Natural killer cell (primary cell): ENCODE measurements at regions of chr7 and their contacts with region 1.

Region 1: DNA sequence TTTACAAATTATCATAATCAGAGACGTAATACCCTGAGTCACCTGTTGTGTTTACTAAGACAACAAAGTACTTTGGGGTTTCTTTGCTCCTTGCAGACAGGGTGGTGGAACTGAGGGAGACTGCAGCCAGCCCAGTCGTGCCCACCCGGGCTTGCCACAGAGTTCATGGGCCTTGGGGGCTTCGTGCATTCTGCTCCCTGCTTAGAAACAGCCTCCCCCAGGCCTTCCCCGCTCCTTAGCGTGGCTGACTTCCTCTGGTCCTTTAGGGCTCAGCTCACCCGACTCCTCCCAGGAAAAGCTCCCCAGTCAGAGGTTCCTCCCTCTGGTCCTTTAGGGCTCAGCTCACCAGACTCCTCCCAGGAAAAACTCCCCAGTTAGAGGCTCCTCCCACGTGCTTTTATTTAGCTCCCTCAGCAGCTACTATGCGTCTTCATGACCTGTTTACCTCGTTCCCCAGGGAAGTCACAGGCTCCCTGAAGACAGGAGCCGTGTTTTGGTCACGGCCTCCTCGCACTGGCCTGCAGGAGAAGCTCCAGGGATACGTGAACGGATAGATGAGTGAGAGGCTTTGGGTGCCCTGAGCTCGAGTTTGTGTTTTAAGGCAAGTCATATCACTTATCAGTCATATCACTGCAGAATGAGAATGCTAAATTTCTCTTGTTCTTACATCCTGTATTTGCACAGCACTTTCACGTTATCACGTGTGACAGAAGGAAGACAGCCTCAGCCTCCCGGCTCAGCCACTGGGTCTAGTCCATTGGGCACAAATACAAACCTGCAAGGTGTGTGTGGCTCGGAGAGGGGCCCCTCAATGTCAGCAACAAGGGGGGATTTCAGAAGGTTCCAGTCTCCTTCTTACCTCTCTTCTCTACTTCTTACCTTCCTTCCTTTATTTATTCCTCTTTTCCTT is 52.7 kb upstream of the VIPR2 start:
- DNase-seq: peak in 1 of 2 donors; percentile 68
- ATAC-seq: peak; percentile 24 to 69 (median 35)
- H3K4me3 ChIP-seq: peak overlapping the region; percentile 2
- H3K4me3 Mint-ChIP-seq: peak overlapping the region; percentile 91
- H3K27ac ChIP-seq: peak overlapping the region; percentile 82
- H3K27ac Mint-ChIP-seq: peak overlapping the region; percentile 96 to 100
- H3K4me1 ChIP-seq: peaks cover 81% of the 10 kb centered on the region
- H3K4me1 Mint-ChIP-seq: peaks cover 59 to 69% of the 10 kb centered on the region in 2 donors
- H3K27me3 ChIP-seq: no peaks in the 10 kb centered on the region
- H3K27me3 Mint-ChIP-seq: no peaks in the 10 kb centered on the region
- CTCF ChIP-seq: no peak

Region 2: DNA sequence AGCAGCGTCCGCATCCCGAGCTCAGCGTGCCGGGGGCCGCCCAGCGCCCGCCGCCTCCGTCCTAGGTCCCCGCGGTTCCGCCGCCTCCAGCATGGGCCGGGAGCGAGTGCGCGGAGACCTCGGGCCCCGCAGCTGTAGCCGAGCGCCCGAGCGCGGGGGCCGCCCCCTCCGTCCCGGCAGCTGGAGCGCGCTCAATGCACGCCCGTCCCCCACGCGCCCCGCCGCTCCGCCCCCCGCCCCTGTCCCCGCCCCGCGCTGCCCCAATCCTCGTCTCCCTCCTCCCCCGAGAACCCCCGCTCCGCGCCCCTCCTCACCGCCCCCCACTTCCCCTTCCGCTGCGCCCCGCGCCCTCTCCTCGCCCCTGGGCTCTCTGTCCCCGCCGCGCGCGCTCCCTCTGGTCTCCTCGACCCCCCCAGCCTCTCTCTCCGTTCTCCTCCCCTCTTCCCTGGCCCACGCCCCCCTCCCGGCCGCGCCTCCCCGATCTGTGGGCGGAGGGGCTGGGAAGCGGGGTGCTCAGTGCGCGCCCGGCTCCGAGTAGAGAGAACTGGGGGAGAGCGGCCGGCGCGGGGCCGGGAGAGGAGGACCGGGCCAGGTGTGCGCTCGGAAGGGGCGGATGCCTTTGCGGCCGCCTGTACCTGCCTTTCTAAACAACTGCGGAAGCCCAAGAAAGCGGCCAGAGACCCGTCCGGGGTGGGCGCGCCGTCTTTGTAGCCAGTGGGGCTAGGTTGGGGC is 52.4 kb before region 1 on chr7 and contains the start of gene VIPR2:
- intact Hi-C with region 1: loop called (anchors 5 kb)
- DNase-seq: peak; percentile 29 to 55
- ATAC-seq: peak; percentile 79 to 82 (median 82)
- H3K4me3 ChIP-seq: peak within 1 kb of the TSS; percentile 45
- H3K4me3 Mint-ChIP-seq: peak within 1 kb of the TSS; percentile 84
- H3K27ac ChIP-seq: no peak within 1 kb of the TSS
- H3K27ac Mint-ChIP-seq: peak within 1 kb of the TSS in 1 of 2 donors; percentile 63
- H3K4me1 ChIP-seq: peaks cover 12% of the 10 kb centered on the region
- H3K4me1 Mint-ChIP-seq: peaks cover 0 to 12% of the 10 kb centered on the region in 2 donors
- H3K27me3 ChIP-seq: peaks cover 2% of the 10 kb centered on the region
- H3K27me3 Mint-ChIP-seq: peaks cover 3 to 11% of the 10 kb centered on the region in 2 donors
- CTCF ChIP-seq: no peak
- total RNA-seq, gene VIPR2: 2.2 to 4.9 (median 4.7) TPM

Region 3: DNA sequence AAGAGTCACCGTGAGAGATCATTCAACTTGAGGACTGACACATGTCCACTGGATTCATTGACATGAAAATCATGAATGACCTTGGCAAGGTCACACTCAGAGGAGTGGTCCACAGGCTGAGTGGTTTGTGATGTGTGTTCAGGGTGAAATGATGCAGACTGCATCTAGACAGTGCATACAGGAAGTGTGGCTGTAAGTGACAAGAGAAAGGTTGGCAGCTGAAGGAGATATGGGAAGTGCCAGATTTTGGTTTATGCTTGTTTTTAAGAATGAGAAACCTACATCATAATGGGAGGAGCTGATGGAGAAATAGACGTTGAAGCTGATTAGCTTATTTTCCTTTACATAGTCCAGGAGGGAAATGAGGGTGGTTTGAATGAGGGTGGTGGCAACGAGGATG is 12.1 kb after region 1 on chr7:
- intact Hi-C with region 1: loop called (anchors 1 kb)
- DNase-seq: peak in 1 of 2 donors; percentile 61
- ATAC-seq: peak; percentile 93 to 96 (median 96)
- H3K4me3 ChIP-seq: no peak overlapping the region
- H3K4me3 Mint-ChIP-seq: no peak overlapping the region
- H3K27ac ChIP-seq: no peak overlapping the region
- H3K27ac Mint-ChIP-seq: no peak overlapping the region
- H3K4me1 ChIP-seq: peaks cover 19% of the 10 kb centered on the region
- H3K4me1 Mint-ChIP-seq: peaks cover 5 to 18% of the 10 kb centered on the region in 2 donors
- H3K27me3 ChIP-seq: no peaks in the 10 kb centered on the region
- H3K27me3 Mint-ChIP-seq: no peaks in the 10 kb centered on the region
- CTCF ChIP-seq: no peak

Region 4: DNA sequence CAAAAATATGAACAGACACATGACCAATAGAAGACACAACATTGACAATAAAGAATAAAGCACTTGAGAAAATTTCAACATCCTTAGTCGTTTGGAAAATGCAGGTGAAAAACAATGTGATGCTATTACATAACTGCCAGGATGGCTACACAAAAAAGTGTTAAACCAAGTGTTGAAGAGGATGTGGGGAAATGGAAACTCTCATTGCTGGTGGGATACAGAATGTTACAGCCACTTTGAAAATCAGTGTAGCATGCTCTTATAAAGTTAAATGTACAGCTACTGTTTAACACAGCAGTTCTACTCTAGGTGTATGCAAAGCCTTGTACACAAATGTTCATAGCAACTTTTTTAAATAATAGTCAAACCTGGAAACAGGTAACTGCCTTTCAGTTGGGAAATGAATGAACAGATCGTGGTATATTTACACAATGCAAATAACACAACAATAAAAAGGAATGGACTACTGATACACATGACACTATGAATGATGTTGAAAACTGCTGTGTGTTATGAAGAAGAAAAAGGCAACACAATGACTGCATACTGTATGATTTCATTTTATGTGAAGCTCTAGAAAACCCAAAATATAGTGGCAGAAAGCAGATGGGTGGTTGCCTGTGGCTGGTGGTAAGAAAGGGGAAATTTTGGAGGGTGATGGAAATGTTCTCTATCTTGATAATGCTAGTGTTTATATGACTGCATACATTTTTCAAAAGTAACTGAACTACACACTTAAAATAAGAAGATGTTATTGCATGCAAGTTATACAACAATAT is 49.6 kb after region 1 on chr7:
- intact Hi-C with region 1: loop called (anchors 5 kb)
- DNase-seq: peak in 1 of 2 donors; percentile 4
- ATAC-seq: peak; percentile 35 to 60 (median 59)
- H3K4me3 ChIP-seq: no peak overlapping the region
- H3K4me3 Mint-ChIP-seq: peak overlapping the region; percentile 41
- H3K27ac ChIP-seq: no peak overlapping the region
- H3K27ac Mint-ChIP-seq: peak overlapping the region; percentile 30 to 79
- H3K4me1 ChIP-seq: peaks cover 5% of the 10 kb centered on the region
- H3K4me1 Mint-ChIP-seq: peaks cover 32 to 38% of the 10 kb centered on the region in 2 donors
- H3K27me3 ChIP-seq: no peaks in the 10 kb centered on the region
- H3K27me3 Mint-ChIP-seq: no peaks in the 10 kb centered on the region
- CTCF ChIP-seq: no peak